Activated naive CD4-positive, alpha-beta T cell treated with anti-CD3 and anti-CD28 coated beads for 36 hours (primary cell): ENCODE measurements at regions of chr18 and their contacts with region 1.

Region 1: DNA sequence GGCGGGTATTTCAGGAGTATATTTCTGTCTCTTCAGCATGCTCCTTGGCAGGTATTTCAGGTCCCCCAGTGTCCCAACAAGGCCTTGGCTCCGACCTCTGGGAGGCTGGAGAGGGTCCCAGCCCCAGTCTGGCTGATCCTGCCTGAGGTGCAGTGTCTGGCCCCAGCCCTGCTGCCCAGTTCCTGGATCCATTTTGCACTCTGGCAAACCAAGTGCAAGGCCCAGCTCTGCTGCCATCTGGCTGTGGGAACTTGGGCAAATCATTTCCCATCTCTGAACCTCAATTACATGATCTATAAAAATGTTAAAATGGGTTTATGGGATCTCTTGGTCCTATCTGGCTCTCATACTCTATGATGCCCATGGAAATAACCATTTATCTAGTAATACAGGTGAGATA is 63.6 kb downstream of the ZBTB7C start:
- DNase-seq: peak; percentile 30
- H3K4me3 Mint-ChIP-seq: no peak overlapping the region
- H3K27ac Mint-ChIP-seq: no peak overlapping the region
- H3K4me1 Mint-ChIP-seq: no peaks in the 10 kb centered on the region
- H3K27me3 Mint-ChIP-seq: no peaks in the 10 kb centered on the region

Region 2: DNA sequence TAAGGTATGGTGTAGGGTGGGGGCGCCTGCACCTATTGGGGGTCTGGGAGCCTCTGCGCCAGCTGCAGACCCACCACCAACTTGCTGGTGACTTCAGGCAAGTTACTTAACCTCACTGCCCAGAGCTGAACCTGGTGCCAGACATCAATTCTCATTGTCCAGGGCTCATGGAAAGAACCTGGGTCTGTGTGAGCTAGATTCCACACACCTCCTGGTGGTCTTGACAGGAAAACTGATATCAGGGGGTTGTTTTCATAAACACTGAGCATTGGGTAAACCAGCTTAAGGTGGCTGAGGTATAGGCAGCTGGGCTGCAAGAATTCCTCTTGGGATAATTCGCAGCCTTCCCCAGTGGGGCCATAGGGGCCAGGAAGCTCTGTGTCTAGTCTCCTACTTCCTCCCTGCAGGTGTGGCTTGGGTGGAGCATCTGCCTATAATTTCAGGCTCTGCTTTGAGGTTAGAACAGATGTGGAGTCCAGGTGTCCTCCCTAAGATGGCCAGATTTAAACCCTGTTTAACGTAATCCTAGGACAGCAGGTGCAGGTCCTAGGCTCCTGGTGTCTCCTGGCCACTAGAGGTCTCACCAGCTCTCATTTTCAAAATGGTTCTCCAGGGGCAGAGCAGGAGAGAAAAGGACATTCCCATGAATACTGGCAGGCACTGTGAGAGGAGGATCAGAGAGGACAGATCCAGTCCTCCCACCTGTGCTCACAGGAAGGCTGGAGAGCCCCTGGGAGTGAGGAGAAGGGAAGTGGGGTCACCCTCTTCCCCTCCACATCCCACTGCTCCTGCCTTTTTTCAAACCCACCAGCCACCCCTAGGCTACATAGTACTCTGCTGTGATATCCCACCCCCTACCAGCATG is 314.7 kb before region 1 on chr18:
- CTCF ChIA-PET with region 1: no interaction called
- intact Hi-C with region 1: loop called (anchors 2 kb)
- DNase-seq: peak; percentile 49
- H3K4me3 Mint-ChIP-seq: no peak overlapping the region
- H3K27ac Mint-ChIP-seq: no peak overlapping the region
- H3K4me1 Mint-ChIP-seq: no peaks in the 10 kb centered on the region
- H3K27me3 Mint-ChIP-seq: no peaks in the 10 kb centered on the region

Region 3: GRCh38 chr18:48367557-48367956 is 22.0 kb after region 1 on chr18:
- CTCF ChIA-PET with region 1: no interaction called
- intact Hi-C with region 1: no loop called
- DNase-seq: no peak
- H3K4me3 Mint-ChIP-seq: no peak overlapping the region
- H3K27ac Mint-ChIP-seq: no peak overlapping the region
- H3K4me1 Mint-ChIP-seq: no peaks in the 10 kb centered on the region
- H3K27me3 Mint-ChIP-seq: peaks cover 13% of the 10 kb centered on the region